ENCODE measurements at regions of chr2 and their contacts with region 1.

Region 1: GRCh38 chr2:191555092-191555742 is 122.7 kb upstream of the NABP1 start:
- DNase-seq: peak; percentile 84

Region 2: GRCh38 chr2:191465766-191466420 is 89.3 kb before region 1 on chr2:
- in situ Hi-C with region 1: no loop called
- DNase-seq: no peak

Region 3: DNA sequence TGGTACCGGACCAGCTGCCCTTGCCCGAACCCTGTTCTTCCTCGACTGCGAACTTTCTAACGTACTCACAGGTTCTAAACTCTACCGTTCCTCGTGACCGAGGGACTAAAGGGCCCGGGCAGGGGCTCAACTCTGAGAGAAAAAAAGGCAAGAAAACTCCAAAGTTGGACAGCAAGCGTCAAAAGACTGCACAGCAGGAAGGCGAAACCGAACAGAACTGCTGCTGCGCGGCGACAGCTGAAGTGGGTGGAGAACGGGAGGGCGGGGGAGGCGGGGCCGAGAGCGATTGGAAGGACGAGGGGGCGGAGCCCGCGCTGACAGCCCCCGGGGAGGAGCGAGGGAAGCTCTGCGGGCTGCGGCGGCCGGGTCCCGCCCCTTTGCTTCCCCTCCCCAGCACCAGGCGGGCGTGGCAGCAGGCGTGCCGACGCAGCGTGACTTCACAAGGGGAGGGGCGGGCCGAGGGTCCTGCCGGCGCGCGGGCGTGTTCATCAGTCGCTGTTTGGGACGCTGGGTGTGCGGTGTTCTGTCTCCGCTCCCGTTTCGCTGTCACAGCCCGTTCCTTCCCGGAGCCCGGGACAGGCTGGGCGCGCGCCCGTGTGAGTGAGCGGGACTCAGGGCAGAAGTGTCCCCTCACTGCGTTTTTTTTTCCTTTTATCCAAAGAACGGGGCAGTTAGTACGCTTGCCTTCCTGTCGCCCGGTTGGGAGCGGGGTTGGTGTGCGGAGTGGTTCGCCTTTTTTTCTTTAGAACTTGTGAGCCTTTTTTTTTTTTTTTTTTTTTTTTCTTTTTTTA is 122.6 kb after region 1 on chr2 and contains the start of gene NABP1:
- in situ Hi-C with region 1: loop called (anchors 25 kb)
- DNase-seq: peak; percentile 98

Region 4: GRCh38 chr2:192194866-192195547 is 639.8 kb after region 1 on chr2 and contains the start of gene TMEFF2:
- in situ Hi-C with region 1: loop called (anchors 25 kb)
- DNase-seq: peak; percentile 90